Sigmoid colon (tissue), 7 donors: ENCODE measurements at regions of chr12 and their contacts with region 1.

Region 1: GRCh38 chr12:133130038-133130807 is at the starts of genes ZNF10 and ZNF891:
- DNase-seq: peak; percentile 98
- H3K4me3 ChIP-seq: peak within 1 kb of the TSS; percentile 77 to 92 (median 82)
- H3K27ac ChIP-seq: peak within 1 kb of the TSS; percentile 95 to 98 (median 96)
- H3K4me1 ChIP-seq: peaks cover 0 to 14% (median 6%) of the 10 kb centered on the region in 4 donors
- H3K27me3 ChIP-seq: no peaks in the 10 kb centered on the region
- CTCF ChIP-seq: no peak
- EP300 ChIP-seq: peak; percentile 15 to 91 (median 74)
- POLR2A ChIP-seq: peak; percentile 69 to 72
- total RNA-seq, gene ZNF10: 10.5 to 22.8 (median 13.1) TPM
- total RNA-seq, gene ZNF891: 3.1 to 6.1 (median 4.4) TPM

Region 2: DNA sequence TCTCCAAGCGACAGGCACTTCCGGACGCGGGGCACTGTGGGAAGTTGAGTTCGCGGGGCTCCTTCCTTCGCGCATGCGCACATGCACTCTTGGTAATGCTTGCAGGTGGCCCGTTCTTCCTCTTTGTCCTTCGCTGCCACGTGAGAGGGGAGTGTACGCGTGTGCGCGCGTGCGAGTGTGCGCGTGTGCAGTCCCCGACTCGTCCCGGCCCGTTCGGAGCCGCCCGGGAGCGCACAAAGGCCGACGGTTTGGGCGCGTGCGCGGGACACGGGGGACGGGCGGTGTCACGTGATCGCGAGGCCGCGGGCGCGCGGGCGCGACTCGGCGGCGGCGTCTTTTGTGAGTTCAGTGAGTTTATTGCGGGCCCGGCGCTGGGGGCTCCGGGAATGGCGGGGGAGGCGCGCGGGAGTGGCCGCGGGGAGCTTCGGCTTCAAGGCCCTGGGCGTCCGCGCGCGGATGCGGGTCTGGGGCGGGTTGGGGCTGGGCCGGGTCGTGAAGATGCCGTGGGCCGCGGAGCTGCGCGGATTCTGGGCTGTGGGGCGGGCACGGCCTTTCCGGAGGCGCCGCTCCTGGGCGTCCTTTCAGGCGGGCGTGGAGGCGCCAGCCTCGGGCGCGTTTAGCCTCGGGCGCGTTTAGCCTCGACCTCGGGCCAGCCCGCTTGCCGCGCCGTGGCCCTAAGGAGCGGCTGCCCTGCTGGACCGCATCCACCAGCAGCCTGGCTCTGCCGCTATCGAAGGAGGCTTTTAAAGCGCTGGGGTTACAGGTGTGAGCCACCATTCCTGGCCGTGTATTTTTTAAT is 92.8 kb before region 1 on chr12 and contains the start of gene ZNF84:
- intact Hi-C with region 1: loop called (anchors 2 kb)
- DNase-seq: peak; percentile 98
- H3K4me3 ChIP-seq: peak within 1 kb of the TSS; percentile 64 to 84 (median 80)
- H3K27ac ChIP-seq: peak within 1 kb of the TSS; percentile 90 to 97 (median 95)
- H3K4me1 ChIP-seq: peaks cover 0 to 13% (median 3%) of the 10 kb centered on the region in 4 donors
- H3K27me3 ChIP-seq: no peaks in the 10 kb centered on the region
- CTCF ChIP-seq: no peak
- EP300 ChIP-seq: peak in 1 of 4 donors; percentile 68
- POLR2A ChIP-seq: peak; percentile 18 to 33
- total RNA-seq, gene ZNF84: 28.8 to 32.7 (median 31.4) TPM

Region 3: DNA sequence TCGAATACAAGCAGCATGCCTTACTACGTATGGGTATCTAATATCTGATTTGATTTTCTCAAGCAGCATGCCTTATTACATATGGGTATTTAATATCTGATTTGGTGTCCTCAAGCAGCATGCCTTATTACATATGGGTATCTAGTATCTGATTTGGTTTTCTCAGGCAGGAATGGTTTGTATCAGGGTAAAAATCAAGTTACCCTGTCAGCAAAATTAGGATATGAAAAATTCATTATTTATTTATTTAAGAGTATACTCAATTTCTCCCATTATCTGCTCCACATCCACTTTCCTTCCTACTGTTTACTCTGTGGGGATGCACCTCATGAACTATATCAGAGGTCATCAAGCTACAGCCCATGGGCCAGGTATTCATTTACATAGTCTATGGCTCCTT is 22.1 kb before region 1 on chr12:
- intact Hi-C with region 1: loop called (anchors 2 kb)
- DNase-seq: no peak
- H3K4me3 ChIP-seq: no peak overlapping the region
- H3K27ac ChIP-seq: no peak overlapping the region
- H3K4me1 ChIP-seq: no peaks in the 10 kb centered on the region
- H3K27me3 ChIP-seq: no peaks in the 10 kb centered on the region
- CTCF ChIP-seq: no peak
- EP300 ChIP-seq: no peak
- POLR2A ChIP-seq: no peak

Region 4: DNA sequence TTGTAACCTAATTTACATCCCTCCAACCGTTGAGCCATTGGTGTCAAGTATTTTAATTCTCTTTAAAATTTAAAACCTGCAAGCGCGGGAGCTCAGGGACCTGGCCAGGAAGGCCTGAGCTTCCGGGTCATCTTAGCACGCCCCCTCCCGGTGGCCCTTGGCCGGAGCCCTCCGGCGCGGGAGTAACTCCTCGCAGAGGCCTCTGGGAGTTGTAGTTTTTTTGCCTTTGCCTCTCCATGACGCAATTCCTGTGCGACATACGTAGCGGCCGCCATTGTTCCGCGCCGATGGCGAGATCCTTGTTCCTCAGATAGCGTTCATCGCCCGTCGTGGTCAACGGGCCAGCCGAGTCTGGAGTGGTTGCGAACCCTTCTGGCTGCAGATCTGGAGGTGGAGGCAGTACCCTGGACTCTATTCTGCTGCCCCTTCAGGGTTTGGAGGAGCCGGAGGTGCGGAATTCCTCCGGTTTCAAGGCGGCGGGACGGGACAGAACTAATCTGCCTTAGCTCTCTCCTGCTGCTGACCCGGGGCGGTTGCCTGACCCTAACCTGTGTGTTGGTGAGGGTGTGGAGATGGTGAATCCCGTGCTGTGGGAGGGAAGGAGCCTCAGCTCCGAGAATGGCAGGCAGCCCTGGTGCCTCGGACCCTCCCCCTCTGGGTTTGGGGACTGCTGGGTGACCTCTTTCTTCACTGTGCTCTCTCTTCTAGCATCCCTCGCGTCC is 51.2 kb after region 1 on chr12 and contains the start of gene ZNF268:
- intact Hi-C with region 1: loop called (anchors 1 kb)
- DNase-seq: peak; percentile 94
- H3K4me3 ChIP-seq: peak within 1 kb of the TSS; percentile 64 to 82 (median 76)
- H3K27ac ChIP-seq: peak within 1 kb of the TSS; percentile 69 to 81 (median 76)
- H3K4me1 ChIP-seq: peaks cover 0 to 13% (median 6%) of the 10 kb centered on the region in 4 donors
- H3K27me3 ChIP-seq: no peaks in the 10 kb centered on the region
- CTCF ChIP-seq: peak; percentile 45 to 68 (median 58)
- EP300 ChIP-seq: peak in 2 of 4 donors; percentile 13 to 19
- POLR2A ChIP-seq: no peak
- total RNA-seq, gene ZNF268: 12.8 to 21.9 (median 19.5) TPM